ENCODE measurements at regions of chr14 and their contacts with region 1.

Region 1: GRCh38 chr14:23076785-23077408 is 18.0 kb downstream of the ACIN1 start:
- DNase-seq: no peak
- H3K4me3 ChIP-seq: no peak overlapping the region
- H3K27ac ChIP-seq: no peak overlapping the region
- H3K4me1 ChIP-seq: peaks cover 6% of the 10 kb centered on the region
- H3K27me3 ChIP-seq: no peaks in the 10 kb centered on the region
- CTCF ChIP-seq: peak; percentile 76

Region 2: GRCh38 chr14:22524115-22524783 is 552.6 kb before region 1 on chr14:
- CTCF ChIA-PET with region 1: no interaction called
- POLR2A ChIA-PET with region 1: no interaction called
- intact Hi-C with region 1: no loop called
- DNase-seq: no peak
- H3K4me3 ChIP-seq: no peak overlapping the region
- H3K27ac ChIP-seq: no peak overlapping the region
- H3K4me1 ChIP-seq: peaks cover 43% of the 10 kb centered on the region
- H3K27me3 ChIP-seq: no peaks in the 10 kb centered on the region
- CTCF ChIP-seq: no peak

Region 3: DNA sequence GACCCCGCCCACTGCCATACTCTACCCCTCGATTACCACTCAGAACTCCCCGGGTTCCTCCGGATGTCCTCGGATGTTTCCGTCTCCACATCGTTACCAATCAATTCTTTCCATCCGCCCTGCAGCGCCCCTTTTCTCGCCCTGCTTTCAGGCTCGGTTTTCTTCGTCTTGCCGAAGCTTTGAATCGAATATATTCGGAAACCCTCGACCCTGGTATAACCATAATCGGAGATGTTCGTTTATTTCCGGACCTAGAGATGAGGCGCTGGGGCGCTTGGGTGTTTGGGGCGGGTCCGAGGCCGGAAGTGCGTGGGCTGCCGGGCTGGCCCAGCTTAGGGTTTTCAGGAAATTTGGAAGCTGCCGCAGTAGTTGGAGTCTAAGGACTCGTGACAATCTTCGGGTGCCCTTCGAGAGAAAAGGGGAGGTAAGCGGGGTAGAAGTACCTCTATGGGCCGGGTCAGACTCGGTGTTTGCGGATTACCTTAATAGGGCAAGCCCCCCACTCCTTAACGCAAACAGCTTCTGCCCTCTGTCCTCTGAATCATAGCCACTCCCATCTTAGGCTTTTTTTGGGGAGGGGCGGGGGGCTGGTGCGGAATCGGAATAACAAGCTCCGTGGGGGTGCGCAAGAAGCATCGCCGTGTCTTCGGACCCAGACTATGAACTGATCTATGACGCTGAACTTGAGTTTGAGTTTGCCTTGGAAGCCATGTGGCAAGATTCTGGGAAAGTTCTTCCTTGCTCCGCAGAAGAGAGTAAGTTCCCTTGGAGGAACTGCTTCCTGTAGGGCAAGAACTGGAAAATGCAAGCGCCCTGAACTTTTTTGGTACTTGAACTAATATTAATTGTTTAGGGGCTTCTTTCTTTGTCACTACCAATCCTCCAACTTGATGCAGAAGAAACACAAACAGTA is 18.6 kb after region 1 on chr14 and contains the start of gene C14orf119:
- CTCF ChIA-PET with region 1: interaction called, 14 read pairs
- POLR2A ChIA-PET with region 1: interaction called, 11 read pairs
- intact Hi-C with region 1: no loop called
- DNase-seq: peak; percentile 100
- H3K4me3 ChIP-seq: peak within 1 kb of the TSS; percentile 64
- H3K27ac ChIP-seq: peak within 1 kb of the TSS; percentile 94
- H3K4me1 ChIP-seq: peaks cover 28% of the 10 kb centered on the region
- H3K27me3 ChIP-seq: no peaks in the 10 kb centered on the region
- CTCF ChIP-seq: no peak
- total RNA-seq, gene C14orf119: 50.3 and 54.5 TPM in 2 replicates

Measured in A673 (cell line).